K562 (cell line): ENCODE measurements at regions of chr3 and their contacts with region 1.

Region 1: DNA sequence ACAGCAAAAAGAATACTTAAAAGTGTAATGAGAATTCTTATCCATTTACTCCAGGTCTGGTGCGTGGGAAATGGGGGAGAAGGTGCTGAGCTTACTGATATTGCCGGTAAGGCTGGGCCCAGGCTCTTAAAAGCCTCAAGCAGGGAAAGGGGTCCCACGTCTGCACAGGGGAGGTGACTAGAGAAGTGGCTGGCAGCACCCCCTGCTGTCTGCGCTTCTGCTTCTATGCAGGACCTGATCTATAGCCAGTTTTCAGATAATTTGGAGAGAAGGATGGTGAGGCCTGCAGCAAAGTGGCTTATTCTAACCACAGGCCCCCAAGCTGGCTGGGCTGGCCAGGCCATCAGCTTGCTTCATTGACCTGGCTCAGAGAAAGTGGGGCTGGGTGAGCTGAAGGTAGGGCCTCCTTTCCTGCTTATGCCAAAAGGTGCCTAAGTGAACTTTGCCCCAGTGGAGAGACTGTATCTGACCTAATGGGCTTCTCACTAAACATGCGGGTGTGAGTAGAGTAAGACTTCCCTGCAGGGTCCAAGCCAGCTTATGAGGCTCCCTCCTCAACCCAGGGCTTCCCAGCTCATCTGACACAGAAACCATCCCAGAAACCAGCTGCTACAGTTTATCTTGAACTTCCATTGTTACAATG is 30.9 kb upstream of the ATP1B3 start:
- DNase-seq: peak in 2 of 4 experiments; percentile 21 to 57
- ATAC-seq: peak; percentile 20; the same call in 2 of the 3 replicates
- H3K4me3 ChIP-seq: no peak overlapping the region
- H3K27ac ChIP-seq: no peak overlapping the region
- H3K4me1 ChIP-seq: peaks cover 22 to 27% of the 10 kb centered on the region in 2 experiments; a peak in 4 of 5 replicates
- H3K27me3 ChIP-seq: no peaks in the 10 kb centered on the region
- CTCF ChIP-seq: peak; percentile 38 to 51 (median 46)
- EP300 ChIP-seq: no peak
- POLR2A ChIP-seq: no peak
- RAD21 ChIP-seq: peak in 1 of 2 experiments; percentile 52; a peak in 2 of 4 replicates

Region 2: DNA sequence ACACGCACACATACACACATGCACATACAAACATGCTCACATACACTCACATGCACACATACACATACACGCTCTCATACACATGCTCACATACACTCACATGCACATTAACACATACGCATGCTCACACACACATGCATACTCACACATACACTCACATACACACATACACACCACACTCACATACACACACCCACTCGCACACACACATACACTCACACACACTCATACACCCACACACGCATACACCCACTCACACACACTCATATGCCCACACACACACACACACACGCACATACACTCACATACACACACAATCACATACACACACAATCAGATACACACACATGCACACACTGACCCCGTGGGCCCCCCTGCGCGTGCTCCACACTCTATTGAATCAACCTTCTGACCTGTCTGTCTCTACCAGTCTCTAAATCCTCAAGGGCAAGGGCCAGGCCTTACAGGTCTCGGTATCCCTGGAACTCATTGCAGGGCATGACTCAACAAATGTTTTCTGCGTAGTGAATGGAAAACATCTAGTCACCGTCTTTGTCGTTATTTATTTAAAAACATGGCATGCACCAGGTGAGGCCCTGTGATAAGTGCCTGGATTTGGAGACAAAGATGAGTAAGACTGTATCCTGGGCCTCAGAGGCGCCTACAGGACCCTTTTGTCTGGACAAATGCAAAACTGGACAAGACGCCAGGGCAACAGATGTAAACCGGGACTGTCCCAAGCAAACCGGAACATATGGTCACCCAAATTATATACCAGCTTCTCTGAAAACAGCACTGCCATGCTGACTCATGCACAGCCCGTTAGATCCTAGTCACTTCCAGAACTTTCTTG is 40.5 kb before region 1 on chr3:
- CTCF ChIA-PET with region 1: no interaction called
- POLR2A ChIA-PET with region 1: interaction called, 3 read pairs
- in situ Hi-C with region 1: no loop called
- intact Hi-C with region 1: loop called (anchors 5 kb)
- DNase-seq: peak; percentile 80 to 90 (median 84)
- ATAC-seq: peak; percentile 90
- H3K4me3 ChIP-seq: no peak overlapping the region
- H3K27ac ChIP-seq: peak overlapping the region; percentile 92
- H3K4me1 ChIP-seq: peaks cover 20 to 39% of the 10 kb centered on the region in 2 experiments; a peak in 4 of 5 replicates
- H3K27me3 ChIP-seq: no peaks in the 10 kb centered on the region; a peak in 1 of 5 replicates
- CTCF ChIP-seq: 0 out of 6 replicates have a peak, but pooled peaks of 1 of the 3 experiments have one; percentile 1
- EP300 ChIP-seq: peak; percentile 98
- POLR2A ChIP-seq: no peak
- RAD21 ChIP-seq: no peak

Region 3: DNA sequence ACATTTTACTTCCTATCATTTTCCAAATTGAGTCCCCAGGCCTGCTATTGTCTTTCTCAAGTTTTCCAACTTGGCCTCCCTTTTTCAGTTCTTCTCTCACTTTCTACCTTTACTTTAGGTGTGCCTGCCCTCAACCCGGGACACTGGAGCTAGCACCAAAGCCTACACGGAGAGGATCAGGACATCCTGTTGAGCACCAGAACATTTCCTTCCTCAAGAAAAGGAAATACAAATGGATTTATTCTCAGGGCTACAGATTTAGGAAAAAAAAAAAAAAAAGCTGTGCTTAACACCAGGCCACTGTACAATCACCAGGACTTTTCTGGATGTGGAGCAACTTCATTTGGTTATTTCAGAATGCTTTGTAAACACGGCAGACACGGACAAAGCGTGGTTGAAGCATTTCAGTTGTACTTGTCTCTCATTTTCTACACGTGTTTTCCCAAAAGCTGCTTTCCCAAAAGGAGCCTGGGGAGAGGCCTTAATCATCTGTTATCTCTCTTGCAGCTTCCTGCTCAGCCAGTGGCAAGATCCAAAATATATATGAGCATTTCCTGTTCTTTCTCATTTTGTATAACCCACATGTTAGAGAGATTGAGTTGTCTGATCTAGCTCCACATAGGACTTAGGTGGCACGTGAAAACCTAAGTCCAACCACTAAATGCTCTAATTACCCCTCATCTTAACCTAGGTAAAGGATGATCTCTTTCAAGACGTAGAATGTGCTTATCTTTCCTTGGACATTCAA is 15.4 kb after region 1 on chr3:
- CTCF ChIA-PET with region 1: no interaction called
- POLR2A ChIA-PET with region 1: interaction called, 11 read pairs
- in situ Hi-C with region 1: no loop called
- intact Hi-C with region 1: no loop called
- DNase-seq: peak in 2 of 4 experiments; percentile 31 to 47
- ATAC-seq: peak; percentile 61
- H3K4me3 ChIP-seq: no peak overlapping the region
- H3K27ac ChIP-seq: peak overlapping the region; percentile 35; the same call in 2 of the 3 replicates
- H3K4me1 ChIP-seq: peaks cover 0 to 35% of the 10 kb centered on the region in 2 experiments; a peak in 4 of 5 replicates
- H3K27me3 ChIP-seq: no peaks in the 10 kb centered on the region
- CTCF ChIP-seq: no peak
- EP300 ChIP-seq: peak; percentile 55; the same call in 1 of the 2 replicates
- POLR2A ChIP-seq: no peak
- RAD21 ChIP-seq: no peak